PC-3 (cell line): ENCODE measurements at regions of chr1 and their contacts with region 1.

Region 1: DNA sequence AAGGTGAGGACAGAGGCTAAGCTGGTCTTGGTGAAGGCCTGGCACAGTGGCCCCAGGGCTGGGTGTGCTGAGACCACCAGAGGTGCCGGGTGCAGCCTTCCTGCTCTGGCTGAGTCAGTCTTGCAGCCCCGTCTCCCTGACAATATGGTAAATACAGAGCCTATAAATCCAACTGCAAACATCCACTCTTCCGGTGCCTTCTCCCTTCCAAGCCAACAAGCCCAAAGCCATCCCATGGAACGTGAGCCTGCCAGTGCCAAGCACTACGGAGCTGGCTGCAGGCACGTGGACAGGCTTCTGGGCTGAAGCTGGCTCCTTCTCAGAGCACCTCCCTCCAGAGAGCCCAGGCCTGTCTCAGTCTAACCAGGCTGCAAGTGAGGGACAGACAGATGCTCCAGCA is 70.0 kb downstream of the TRABD2B start:
- DNase-seq: peak; percentile 94
- ATAC-seq: peak; percentile 76
- H3K4me3 ChIP-seq: no peak overlapping the region
- H3K27ac ChIP-seq: peak overlapping the region; percentile 89
- H3K4me1 ChIP-seq: peaks cover 39% of the 10 kb centered on the region
- H3K27me3 ChIP-seq: no peaks in the 10 kb centered on the region
- CTCF ChIP-seq: no peak

Region 2: DNA sequence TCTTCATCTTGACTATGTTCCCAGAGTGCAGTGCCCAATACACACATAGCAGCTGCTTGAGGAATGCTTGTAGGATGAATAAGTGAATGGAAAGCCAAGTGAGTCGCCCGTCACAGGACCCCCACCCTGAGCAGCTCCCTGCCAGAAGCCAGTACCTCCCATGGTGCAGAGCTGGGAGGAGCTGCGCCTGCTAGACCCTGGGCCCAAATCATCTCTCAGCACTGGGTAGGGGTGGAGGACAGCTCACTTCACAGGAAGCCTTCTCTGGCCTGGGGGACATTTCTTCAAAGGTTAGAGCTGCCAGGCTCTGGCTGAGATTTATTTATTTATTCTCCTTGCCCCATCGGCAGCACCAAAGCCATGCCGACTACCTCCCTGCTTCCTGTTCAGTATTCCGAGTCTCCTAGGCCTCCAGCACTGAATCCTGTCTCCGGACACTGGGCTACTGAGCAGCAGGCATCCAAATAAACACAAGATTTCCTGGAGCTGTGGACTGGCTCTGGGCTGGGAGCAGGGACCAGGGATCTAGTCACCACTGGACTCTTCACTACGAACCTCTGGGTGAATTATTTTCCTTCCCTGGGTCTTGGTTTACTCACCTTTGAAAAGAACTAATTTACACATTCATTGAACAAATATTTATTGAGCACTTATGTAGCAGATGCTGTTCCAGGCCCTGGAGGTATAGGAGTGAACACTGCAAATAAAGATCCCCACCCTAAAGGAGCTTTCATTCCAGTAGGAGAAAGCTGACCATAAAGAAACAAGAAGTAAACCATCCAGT is 117.7 kb before region 1 on chr1:
- CTCF ChIA-PET with region 1: no interaction called
- POLR2A ChIA-PET with region 1: interaction called, 3 read pairs
- intact Hi-C with region 1: loop called (anchors 2 kb)
- DNase-seq: peak; percentile 57
- ATAC-seq: peak; percentile 79
- H3K4me3 ChIP-seq: no peak overlapping the region
- H3K27ac ChIP-seq: peak overlapping the region; percentile 49
- H3K4me1 ChIP-seq: peaks cover 23% of the 10 kb centered on the region
- H3K27me3 ChIP-seq: no peaks in the 10 kb centered on the region
- CTCF ChIP-seq: no peak

Region 3: GRCh38 chr1:47871799-47872353 is 55.3 kb before region 1 on chr1:
- CTCF ChIA-PET with region 1: no interaction called
- POLR2A ChIA-PET with region 1: no interaction called
- intact Hi-C with region 1: loop called (anchors 1 kb)
- DNase-seq: peak; percentile 89
- ATAC-seq: peak; percentile 70
- H3K4me3 ChIP-seq: no peak overlapping the region
- H3K27ac ChIP-seq: peak overlapping the region; percentile 94
- H3K4me1 ChIP-seq: peaks cover 57% of the 10 kb centered on the region
- H3K27me3 ChIP-seq: no peaks in the 10 kb centered on the region
- CTCF ChIP-seq: no peak

Region 4: GRCh38 chr1:47894713-47895537 is 32.2 kb before region 1 on chr1:
- CTCF ChIA-PET with region 1: no interaction called
- POLR2A ChIA-PET with region 1: interaction called, 3 read pairs
- intact Hi-C with region 1: loop called (anchors 2 kb)
- DNase-seq: peak; percentile 96
- ATAC-seq: peak; percentile 90
- H3K4me3 ChIP-seq: no peak overlapping the region
- H3K27ac ChIP-seq: peak overlapping the region; percentile 92
- H3K4me1 ChIP-seq: peaks cover 37% of the 10 kb centered on the region
- H3K27me3 ChIP-seq: no peaks in the 10 kb centered on the region
- CTCF ChIP-seq: no peak

Region 5: GRCh38 chr1:47906009-47906432 is 21.1 kb before region 1 on chr1:
- CTCF ChIA-PET with region 1: no interaction called
- POLR2A ChIA-PET with region 1: no interaction called
- intact Hi-C with region 1: loop called (anchors 2 kb)
- DNase-seq: peak; percentile 82
- ATAC-seq: peak; percentile 96
- H3K4me3 ChIP-seq: no peak overlapping the region
- H3K27ac ChIP-seq: peak overlapping the region; percentile 69
- H3K4me1 ChIP-seq: peaks cover 25% of the 10 kb centered on the region
- H3K27me3 ChIP-seq: no peaks in the 10 kb centered on the region
- CTCF ChIP-seq: no peak